OCI-LY7 (cell line): ENCODE measurements at regions of chr16 and their contacts with region 1.

Region 1: DNA sequence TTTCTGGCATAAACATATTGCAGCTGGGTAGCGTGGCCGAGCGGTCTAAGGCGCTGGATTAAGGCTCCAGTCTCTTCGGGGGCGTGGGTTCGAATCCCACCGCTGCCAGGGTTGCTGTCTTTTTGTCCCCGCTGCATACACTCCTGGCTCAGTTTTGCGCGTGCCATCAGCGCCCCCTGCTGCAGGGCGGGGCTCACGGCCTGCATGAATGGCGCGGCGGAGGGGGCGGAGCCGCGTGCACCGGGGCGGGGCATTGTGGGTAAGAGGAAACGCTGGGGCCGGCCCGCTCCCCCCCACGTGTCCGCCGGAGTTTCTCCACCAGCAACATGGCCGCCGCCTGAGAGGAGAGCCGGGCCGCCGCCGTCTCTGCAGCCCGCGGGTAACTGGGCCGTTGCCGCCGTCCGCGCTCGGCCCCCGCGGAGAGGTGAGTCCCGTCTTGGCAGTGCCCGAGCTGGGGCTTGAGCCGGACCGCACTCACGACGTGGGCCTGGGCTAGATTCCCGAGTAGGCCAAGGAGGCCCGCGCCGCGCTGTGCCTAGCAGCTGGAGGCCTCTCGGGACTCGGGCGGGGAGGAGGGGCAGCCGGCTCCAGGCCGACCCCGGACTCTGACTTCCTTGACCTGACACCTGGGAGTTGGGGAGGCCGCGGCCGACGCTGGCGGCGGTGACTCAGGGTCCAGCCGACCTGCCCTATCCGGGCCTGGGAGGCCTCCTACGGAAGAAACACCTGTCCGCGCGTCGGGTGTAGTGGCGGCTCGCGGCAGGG is at the start of gene POLR3E:
- DNase-seq: peak; percentile 97
- H3K4me3 ChIP-seq: peak within 1 kb of the TSS; percentile 95
- H3K27ac ChIP-seq: peak within 1 kb of the TSS; percentile 74
- H3K4me1 ChIP-seq: peaks cover 25% of the 10 kb centered on the region
- CTCF ChIP-seq: peak; percentile 84
- total RNA-seq, gene POLR3E: 71.1 and 74.5 TPM in 2 replicates

Region 2: DNA sequence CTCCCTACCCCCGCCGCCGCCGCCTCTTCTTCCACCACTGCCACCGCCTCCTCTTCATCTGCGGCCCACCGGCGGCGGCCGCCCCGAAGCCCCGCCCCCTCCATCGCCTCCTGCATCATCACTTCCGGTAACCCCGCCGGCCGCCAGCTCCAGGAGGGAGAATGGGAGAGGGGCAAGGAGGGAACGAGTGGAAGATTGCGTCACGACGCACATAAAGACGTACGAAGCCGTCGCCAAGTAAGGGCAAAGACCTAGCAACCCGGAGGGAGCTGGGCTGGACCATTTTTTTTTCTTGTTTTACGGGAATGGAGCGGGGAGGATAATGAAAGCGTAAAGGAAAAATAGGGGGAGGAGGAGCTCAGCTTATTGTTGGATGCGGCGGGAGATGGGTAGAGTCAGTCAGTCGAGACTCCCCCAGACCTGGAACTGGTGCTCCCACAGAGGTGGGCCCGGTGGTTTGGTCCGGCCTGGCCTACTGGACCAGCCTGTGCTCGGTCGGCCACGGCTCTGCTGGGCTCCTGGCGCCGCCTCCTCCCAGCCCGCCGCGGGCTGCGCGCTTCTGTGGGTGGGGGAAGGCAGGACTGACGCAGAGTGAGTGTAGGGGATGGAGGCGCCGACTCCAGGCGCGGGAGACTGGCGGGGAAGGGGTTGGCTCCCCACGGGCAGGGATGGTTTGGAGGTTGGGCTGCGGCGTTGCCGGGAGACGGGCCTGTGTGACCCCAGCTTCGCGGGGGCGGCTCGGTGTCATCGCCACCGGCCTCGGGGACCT is 1396.8 kb before region 1 on chr16 and contains the starts of genes DCUN1D3 and LYRM1:
- CTCF ChIA-PET with region 1: no interaction called
- POLR2A ChIA-PET with region 1: no interaction called
- intact Hi-C with region 1: loop called (anchors 5 kb)
- DNase-seq: peak; percentile 95
- H3K4me3 ChIP-seq: peak within 1 kb of the TSS; percentile 75
- H3K27ac ChIP-seq: peak within 1 kb of the TSS; percentile 56
- H3K4me1 ChIP-seq: peaks cover 50% of the 10 kb centered on the region
- CTCF ChIP-seq: no peak
- total RNA-seq, gene DCUN1D3: 3.1 and 3.3 TPM in 2 replicates
- total RNA-seq, gene LYRM1: 24.0 and 24.3 TPM in 2 replicates

Region 3: DNA sequence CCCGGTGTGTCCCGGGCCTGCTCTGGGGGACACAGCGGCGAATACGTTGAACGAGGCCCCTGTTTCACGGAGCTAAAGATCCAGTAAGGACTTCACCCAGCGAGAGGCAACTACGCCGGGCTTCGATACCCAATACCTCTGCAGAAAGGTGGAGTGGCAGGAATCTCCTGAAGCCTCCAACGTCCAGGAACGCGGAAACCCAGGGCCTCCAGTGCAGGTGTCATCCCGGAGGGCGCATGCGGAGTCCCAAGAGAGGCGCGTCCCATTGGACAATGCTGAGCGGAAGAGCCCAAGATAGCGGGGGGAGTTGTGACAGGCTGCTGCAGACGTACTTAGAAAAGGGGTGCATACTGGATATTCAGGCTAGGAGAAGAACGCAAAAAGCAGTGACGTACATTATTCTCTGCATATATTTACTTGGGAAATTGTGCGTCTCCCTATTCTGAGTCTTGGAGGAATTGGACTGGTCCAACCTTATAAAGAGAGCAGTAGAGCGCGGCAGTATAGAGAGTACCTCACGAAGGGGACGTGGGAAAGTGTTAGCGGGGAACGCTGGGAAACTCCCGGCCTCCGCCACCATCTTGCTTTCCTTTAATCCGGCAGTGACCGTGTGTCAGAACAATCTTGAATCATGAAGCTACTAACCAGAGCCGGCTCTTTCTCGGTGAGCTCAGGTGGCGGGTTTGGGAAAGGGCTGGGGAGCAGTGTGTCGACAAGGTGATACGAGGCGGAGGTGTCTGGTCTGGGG is 344.3 kb before region 1 on chr16 and contains the start of gene UQCRC2:
- CTCF ChIA-PET with region 1: no interaction called
- POLR2A ChIA-PET with region 1: no interaction called
- intact Hi-C with region 1: loop called (anchors 5 kb)
- DNase-seq: peak; percentile 95
- H3K4me3 ChIP-seq: peak within 1 kb of the TSS; percentile 93
- H3K27ac ChIP-seq: peak within 1 kb of the TSS; percentile 67
- H3K4me1 ChIP-seq: peaks cover 36% of the 10 kb centered on the region
- CTCF ChIP-seq: no peak
- total RNA-seq, gene UQCRC2: 121 and 129 TPM in 2 replicates

Region 4: DNA sequence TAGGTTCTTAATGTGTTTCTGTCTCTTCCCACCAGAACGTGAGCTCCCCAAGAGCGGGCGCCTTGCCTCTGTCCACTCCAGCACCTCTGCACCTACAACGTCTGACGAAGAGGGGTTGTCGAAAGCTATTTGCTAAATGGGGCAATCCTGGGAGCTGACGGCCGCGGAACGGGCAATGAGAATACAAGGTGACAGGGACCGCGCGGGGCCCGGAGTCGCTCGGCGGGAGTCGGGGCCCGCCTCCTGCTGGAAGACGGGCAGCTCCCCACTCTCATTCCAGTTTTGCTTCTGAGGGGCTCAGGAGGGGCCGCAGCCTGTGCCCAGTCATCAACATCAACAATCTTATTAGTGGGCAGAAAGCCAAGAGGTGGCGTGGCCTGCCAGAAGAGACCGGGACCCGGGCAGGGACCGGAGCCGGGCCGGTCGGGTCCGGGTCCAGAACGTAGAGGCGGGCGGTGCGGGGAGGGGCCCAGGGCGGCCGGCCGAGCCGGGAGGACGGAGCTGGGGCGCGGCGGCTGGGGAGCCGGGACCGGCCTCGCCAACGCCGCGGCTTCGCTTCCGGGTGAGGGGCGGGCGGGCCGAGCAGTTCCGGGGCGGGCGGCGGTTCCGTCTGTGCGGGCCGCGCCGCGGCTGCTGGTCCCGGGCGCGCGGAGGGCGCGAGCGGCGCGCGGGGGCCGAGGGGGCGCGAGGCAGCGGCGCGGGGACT is 289.6 kb before region 1 on chr16 and contains the start of gene MOSMO:
- CTCF ChIA-PET with region 1: no interaction called
- POLR2A ChIA-PET with region 1: no interaction called
- intact Hi-C with region 1: loop called (anchors 5 kb)
- DNase-seq: peak; percentile 65
- H3K4me3 ChIP-seq: peak within 1 kb of the TSS; percentile 99
- H3K27ac ChIP-seq: no peak within 1 kb of the TSS
- H3K4me1 ChIP-seq: peaks cover 16% of the 10 kb centered on the region
- CTCF ChIP-seq: no peak
- total RNA-seq, gene MOSMO: 6.8 and 9.6 TPM in 2 replicates

Region 5: DNA sequence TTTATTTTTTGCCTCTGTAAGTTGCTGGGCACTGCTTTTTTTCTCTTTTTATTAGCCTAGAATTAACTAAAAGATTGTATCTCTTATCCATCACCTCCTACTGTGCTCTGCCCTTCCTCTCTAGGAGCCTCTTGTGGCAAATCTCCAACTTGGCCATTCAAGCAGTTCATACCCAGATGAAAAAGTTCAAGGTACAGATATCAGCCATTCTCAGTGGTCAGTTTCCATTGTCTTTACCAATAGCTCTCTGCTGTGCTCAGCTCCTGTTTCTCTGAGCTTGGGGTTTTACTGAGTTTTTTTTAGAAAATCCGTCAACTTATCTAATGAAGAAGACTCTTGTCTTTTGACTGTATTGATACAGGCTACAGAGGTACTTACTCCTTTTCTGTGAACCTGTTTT is 273.8 kb before region 1 on chr16:
- CTCF ChIA-PET with region 1: no interaction called
- POLR2A ChIA-PET with region 1: no interaction called
- intact Hi-C with region 1: no loop called
- DNase-seq: no peak
- H3K4me3 ChIP-seq: no peak overlapping the region
- H3K27ac ChIP-seq: no peak overlapping the region
- H3K4me1 ChIP-seq: peaks cover 12% of the 10 kb centered on the region
- CTCF ChIP-seq: no peak